ENCODE measurements at regions of chr1 and their contacts with region 1.

Region 1: GRCh38 chr1:165403835-165404482 is 41.0 kb downstream of the RXRG start:
- DNase-seq: no peak
- ATAC-seq: peak; percentile 56 to 66

Region 2: GRCh38 chr1:165543532-165544495 is 139.9 kb after region 1 on chr1 and contains the start of gene LRRC52:
- intact Hi-C with region 1: loop called in 1 of 2 experiments (anchors 5 kb)
- DNase-seq: peak; percentile 86
- ATAC-seq: peak; percentile 75 to 87
- total RNA-seq, gene LRRC52: 0.60 TPM in 1 of 2 donors, not detected in the other

Region 3: DNA sequence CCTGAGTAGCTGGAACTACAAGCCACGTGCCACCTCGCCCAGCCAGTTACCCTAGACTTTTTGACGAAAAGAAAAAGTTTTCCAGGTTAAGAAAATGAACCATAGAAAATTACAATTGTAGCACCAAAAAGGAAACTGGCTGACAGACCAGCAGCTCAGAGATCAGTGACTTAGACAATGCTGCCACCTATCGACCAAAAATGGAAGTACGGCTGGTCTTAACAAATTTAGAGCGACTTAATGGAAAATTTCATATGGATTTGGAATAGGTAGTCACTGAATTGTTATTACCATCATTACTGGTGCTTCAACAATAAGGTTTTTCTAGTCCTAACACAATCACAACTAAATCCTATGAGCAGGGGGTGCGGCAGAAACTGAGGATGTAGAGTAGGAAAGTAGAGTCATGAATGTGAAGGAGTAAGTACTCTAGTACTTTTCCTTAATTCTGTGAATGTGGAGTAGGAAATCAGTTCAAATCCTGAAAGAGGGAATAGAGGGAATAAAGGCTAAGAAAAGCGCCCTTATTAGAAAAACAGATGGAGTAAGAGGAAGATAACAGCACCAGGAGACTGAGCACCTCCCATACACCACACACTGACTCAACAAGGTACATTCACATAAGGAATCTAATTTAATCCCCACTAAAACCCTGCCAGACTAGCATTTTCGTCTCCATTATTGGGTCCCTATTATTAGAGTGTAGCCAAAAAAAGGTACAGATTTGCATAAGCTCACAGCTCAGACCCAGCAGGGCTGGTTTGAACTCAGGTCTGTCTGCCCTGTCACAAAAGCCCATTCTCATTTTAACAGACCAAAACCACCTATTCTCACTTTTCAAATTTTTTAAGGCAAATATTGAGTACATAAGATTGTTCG is 189.2 kb after region 1 on chr1:
- intact Hi-C with region 1: loop called in 1 of 2 experiments (anchors 2 kb)
- DNase-seq: peak; percentile 54
- ATAC-seq: peak; percentile 48 to 60